ENCODE measurements at regions of chr3 and their contacts with region 1.

Region 1: DNA sequence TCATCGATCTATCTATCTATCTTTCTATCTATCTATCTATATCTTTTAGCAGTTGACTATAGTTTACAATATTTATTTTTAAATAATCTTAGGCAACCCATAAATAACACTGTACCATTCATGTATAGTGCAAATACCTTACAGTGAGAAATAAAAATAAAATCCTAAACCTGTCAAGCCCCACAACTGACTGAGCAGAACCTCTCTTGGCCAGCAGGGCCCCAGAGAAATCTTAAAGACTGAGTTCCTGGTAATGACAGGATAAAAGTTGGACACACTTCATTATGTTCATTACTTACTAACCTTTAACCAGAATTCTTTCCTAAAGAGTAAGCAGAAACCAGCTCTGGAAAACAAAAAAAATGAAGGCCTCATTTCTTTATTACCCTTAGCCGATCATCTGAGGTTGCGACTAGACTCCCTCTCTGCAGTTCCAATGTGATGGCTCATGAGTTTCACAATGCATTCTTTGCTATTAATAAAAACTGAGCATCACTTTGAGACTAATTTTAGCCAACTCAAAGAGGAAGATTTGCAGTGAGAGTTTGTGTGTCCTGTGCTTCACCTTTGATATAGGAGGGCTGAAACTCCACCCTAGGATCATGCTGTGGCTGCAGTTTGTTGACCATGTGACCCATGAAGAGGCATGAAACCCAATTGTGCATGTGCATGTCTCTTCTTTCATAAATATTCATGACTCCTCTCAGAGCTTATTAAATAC is 1072.0 kb downstream of the NSUN3 start:
- DNase-seq: no peak
- ATAC-seq: peak; percentile 91

Region 2: GRCh38 chr3:94928907-94929362 is 205.9 kb before region 1 on chr3:
- intact Hi-C with region 1: loop called (anchors 5 kb)
- DNase-seq: no peak
- ATAC-seq: no peak